Transverse colon (tissue), 4 donors: ENCODE measurements at regions of chr7 and their contacts with region 1.

Region 1: GRCh38 chr7:157165987-157166386 is 27.3 kb downstream of the UBE3C start:
- DNase-seq: no peak
- H3K4me3 ChIP-seq: no peak overlapping the region
- H3K27ac ChIP-seq: no peak overlapping the region
- H3K4me1 ChIP-seq: no peaks in the 10 kb centered on the region
- H3K27me3 ChIP-seq: no peaks in the 10 kb centered on the region
- CTCF ChIP-seq: no peak
- EP300 ChIP-seq: no peak
- POLR2A ChIP-seq: no peak

Region 2: GRCh38 chr7:156668181-156668624 is 497.8 kb before region 1 on chr7:
- in situ Hi-C with region 1: no loop called
- intact Hi-C with region 1: no loop called
- DNase-seq: no peak
- H3K4me3 ChIP-seq: no peak overlapping the region
- H3K27ac ChIP-seq: no peak overlapping the region
- H3K4me1 ChIP-seq: peaks cover 0 to 12% (median 4%) of the 10 kb centered on the region in 4 donors
- H3K27me3 ChIP-seq: no peaks in the 10 kb centered on the region
- CTCF ChIP-seq: no peak
- EP300 ChIP-seq: no peak
- POLR2A ChIP-seq: no peak

Region 3: GRCh38 chr7:156680281-156680680 is 485.7 kb before region 1 on chr7:
- in situ Hi-C with region 1: no loop called
- intact Hi-C with region 1: no loop called
- DNase-seq: no peak
- H3K4me3 ChIP-seq: no peak overlapping the region
- H3K27ac ChIP-seq: no peak overlapping the region
- H3K4me1 ChIP-seq: no peaks in the 10 kb centered on the region
- H3K27me3 ChIP-seq: no peaks in the 10 kb centered on the region
- CTCF ChIP-seq: no peak
- EP300 ChIP-seq: no peak
- POLR2A ChIP-seq: no peak

Region 4: GRCh38 chr7:157228864-157229422 is 63.0 kb after region 1 on chr7:
- in situ Hi-C with region 1: no loop called
- intact Hi-C with region 1: loop called (anchors 10 kb)
- DNase-seq: no peak
- H3K4me3 ChIP-seq: no peak overlapping the region
- H3K27ac ChIP-seq: no peak overlapping the region
- H3K4me1 ChIP-seq: no peaks in the 10 kb centered on the region
- H3K27me3 ChIP-seq: no peaks in the 10 kb centered on the region
- CTCF ChIP-seq: no peak
- EP300 ChIP-seq: no peak
- POLR2A ChIP-seq: no peak